ENCODE measurements at regions of chr6 and their contacts with region 1.

Region 1: DNA sequence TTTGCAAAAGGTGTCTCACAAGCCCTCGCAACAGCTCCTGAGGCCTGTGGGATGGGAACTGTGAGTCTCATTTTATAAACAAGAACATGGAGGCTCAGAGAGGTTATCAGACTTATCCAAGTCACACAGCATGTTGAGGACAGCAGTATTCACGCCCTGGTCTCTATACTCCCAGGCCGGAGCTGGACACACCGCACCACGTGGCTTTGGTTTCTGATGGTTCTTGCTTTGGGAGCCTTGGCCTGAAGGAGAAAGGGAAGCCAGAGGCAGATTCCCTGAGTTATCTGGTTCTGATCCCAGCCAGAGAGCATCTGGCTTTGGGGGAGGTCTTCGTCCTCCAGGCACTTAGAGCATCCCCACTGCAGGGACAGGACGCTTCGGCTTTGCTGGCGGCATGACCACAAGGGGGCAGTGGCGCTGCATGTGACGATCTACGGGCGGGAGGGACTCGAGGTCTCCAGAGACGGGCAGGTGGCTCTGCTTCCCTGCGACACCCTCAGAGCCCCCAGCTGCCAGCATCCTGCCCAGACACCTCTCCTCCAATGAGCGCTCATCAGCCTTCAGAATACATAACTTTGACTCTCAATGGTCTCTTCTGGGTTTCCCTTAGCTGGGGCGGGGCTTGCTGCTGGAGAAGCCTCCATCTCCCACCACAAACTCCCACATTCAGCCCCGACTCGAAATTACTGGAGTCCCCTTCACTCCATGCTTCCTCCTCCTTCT is 51.4 kb upstream of the SAYSD1 start:
- DNase-seq: peak; percentile 72 to 85
- ATAC-seq: peak; percentile 65 to 79 (median 72)
- H3K4me3 ChIP-seq: no peak overlapping the region
- H3K27ac ChIP-seq: no peak overlapping the region
- H3K4me1 ChIP-seq: no peaks in the 10 kb centered on the region
- H3K27me3 ChIP-seq: peaks cover 0 to 12% (median 2%) of the 10 kb centered on the region in 3 donors
- CTCF ChIP-seq: peak; percentile 84

Region 2: DNA sequence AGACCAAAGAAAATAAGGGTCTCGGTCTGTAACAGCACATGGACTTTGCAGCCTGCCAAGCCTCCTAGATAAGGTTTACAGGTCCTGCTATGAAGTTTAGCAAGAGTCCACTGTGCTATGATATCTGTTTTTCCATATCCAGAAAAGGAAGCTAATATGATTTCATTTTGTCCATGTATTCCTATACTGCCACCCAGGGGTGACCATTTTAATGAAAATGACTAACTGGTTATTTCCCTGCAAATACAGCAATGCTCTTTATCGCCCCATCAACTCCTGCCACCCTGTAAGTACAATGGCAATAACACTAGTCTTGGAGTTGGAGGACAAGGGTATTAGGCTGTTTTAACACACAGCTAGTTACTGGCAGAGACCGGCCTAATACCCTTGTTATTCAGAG is 232.9 kb before region 1 on chr6:
- intact Hi-C with region 1: no loop called
- DNase-seq: no peak
- ATAC-seq: no peak
- H3K4me3 ChIP-seq: no peak overlapping the region
- H3K27ac ChIP-seq: no peak overlapping the region
- H3K4me1 ChIP-seq: no peaks in the 10 kb centered on the region
- H3K27me3 ChIP-seq: no peaks in the 10 kb centered on the region
- CTCF ChIP-seq: no peak

Region 3: GRCh38 chr6:38973178-38974054 is 192.9 kb before region 1 on chr6:
- intact Hi-C with region 1: loop called in 1 of 2 experiments (anchors 10 kb)
- DNase-seq: no peak
- ATAC-seq: peak; percentile 46 to 78 (median 70)
- H3K4me3 ChIP-seq: no peak overlapping the region
- H3K27ac ChIP-seq: no peak overlapping the region
- H3K4me1 ChIP-seq: no peaks in the 10 kb centered on the region
- H3K27me3 ChIP-seq: peaks cover 0 to 2% (median 1%) of the 10 kb centered on the region in 3 donors
- CTCF ChIP-seq: peak; percentile 66

Region 4: DNA sequence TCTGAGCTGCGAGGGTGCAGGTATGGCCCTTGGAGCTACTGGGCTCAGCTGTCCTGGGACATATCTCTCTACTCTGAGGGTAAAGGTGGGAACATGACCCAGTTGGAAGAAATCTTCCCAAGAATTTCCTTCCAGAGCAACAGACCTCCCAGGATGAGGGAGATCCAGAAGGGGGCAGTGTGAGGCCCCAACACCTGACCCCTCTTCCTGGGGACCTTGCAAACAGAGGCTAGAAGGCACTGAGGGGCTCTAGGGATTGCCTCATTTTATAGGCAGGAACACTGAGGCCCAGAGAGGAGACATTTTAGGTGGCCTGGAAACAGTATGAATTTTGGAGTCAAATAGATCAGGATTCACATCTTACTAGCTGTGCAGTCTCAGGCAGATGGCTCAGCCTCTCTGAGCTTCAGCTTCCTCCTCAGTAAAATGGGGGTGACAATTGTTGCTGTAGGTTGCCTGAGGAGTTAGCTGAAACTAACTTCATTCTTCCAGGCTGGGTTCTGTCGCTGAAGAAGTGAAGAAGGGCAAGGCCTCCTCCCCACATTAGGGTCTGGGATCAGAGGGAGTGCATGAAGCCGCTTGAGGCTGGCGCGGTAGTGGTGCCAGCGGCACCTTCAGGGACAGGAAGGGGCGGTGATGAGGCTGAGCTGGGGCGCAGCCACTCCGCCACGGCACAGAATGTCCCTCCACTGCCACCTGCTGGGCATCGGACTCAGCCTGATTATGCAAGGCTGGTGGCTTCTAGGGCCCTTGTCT is 136.5 kb after region 1 on chr6:
- intact Hi-C with region 1: loop called (anchors 2 to 5 kb)
- DNase-seq: peak; percentile 81 to 89
- ATAC-seq: peak; percentile 87 to 89 (median 88)
- H3K4me3 ChIP-seq: no peak overlapping the region
- H3K27ac ChIP-seq: no peak overlapping the region
- H3K4me1 ChIP-seq: no peaks in the 10 kb centered on the region
- H3K27me3 ChIP-seq: no peaks in the 10 kb centered on the region
- CTCF ChIP-seq: peak; percentile 81

Region 5: GRCh38 chr6:39309942-39310531 is 143.7 kb after region 1 on chr6:
- intact Hi-C with region 1: loop called in 1 of 2 experiments (anchors 5 kb)
- DNase-seq: peak; percentile 66 to 82
- ATAC-seq: peak; percentile 82 to 91 (median 84)
- H3K4me3 ChIP-seq: no peak overlapping the region
- H3K27ac ChIP-seq: no peak overlapping the region
- H3K4me1 ChIP-seq: peaks cover 12% of the 10 kb centered on the region
- H3K27me3 ChIP-seq: peaks cover 0 to 33% (median 0%) of the 10 kb centered on the region in 3 donors
- CTCF ChIP-seq: peak; percentile 89

Region 6: GRCh38 chr6:39812853-39813533 is 646.6 kb after region 1 on chr6:
- intact Hi-C with region 1: no loop called
- DNase-seq: peak in 1 of 2 donors; percentile 49
- ATAC-seq: peak in 3 of 4 donors; percentile 43 to 55 (median 52)
- H3K4me3 ChIP-seq: no peak overlapping the region
- H3K27ac ChIP-seq: no peak overlapping the region
- H3K4me1 ChIP-seq: peaks cover 15% of the 10 kb centered on the region
- H3K27me3 ChIP-seq: no peaks in the 10 kb centered on the region
- CTCF ChIP-seq: no peak

Measured in psoas muscle (tissue), 8 donors.